ENCODE measurements at regions of chr17 and their contacts with region 1.

Region 1: GRCh38 chr17:30586818-30587595 is 109.8 kb downstream of the GOSR1 start:
- DNase-seq: peak; percentile 86
- ATAC-seq: peak; percentile 51; the same call in 1 of the 2 replicates
- H3K4me3 ChIP-seq: no peak overlapping the region
- H3K27ac ChIP-seq: no peak overlapping the region
- H3K4me1 ChIP-seq: peaks cover 2% of the 10 kb centered on the region
- H3K27me3 ChIP-seq: peaks cover 5% of the 10 kb centered on the region
- CTCF ChIP-seq: no peak
- POLR2A ChIP-seq: no peak
- RAD21 ChIP-seq: no peak

Region 2: DNA sequence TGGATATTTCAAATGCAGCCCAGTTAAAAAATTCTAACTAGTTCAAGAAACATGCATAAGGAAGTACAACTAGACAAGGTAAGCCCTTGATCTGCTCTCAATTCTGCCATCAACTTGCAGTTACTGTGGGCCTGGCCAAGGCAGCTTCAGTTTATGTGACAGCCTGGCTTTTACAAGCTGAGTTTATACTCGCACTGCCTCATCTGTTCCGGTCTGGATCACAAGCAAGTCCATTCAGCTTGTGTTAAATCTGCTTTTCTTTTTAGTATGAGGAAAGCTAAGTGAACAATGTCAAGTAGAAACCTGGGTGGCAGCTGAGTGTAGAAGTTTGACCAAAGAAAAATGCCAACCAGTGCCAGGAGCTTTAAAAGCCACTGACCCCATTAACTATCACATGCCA is 887.7 kb before region 1 on chr17:
- CTCF ChIA-PET with region 1: no interaction called
- POLR2A ChIA-PET with region 1: no interaction called
- dilution Hi-C with region 1: no loop called
- in situ Hi-C with region 1: no loop called
- intact Hi-C with region 1: no loop called
- DNase-seq: no peak
- ATAC-seq: no peak
- H3K4me3 ChIP-seq: no peak overlapping the region
- H3K27ac ChIP-seq: 0 out of 2 replicates have a peak overlapping the region, but pooled peaks have one; percentile 10
- H3K4me1 ChIP-seq: peaks cover 3% of the 10 kb centered on the region; the same call in 1 of the 2 replicates
- H3K27me3 ChIP-seq: no peaks in the 10 kb centered on the region
- CTCF ChIP-seq: no peak
- POLR2A ChIP-seq: no peak
- RAD21 ChIP-seq: no peak

Region 3: GRCh38 chr17:30093463-30094147 is 493.4 kb before region 1 on chr17:
- CTCF ChIA-PET with region 1: no interaction called
- POLR2A ChIA-PET with region 1: no interaction called
- dilution Hi-C with region 1: no loop called
- in situ Hi-C with region 1: no loop called
- intact Hi-C with region 1: no loop called
- DNase-seq: peak; percentile 58
- ATAC-seq: peak; percentile 76
- H3K4me3 ChIP-seq: no peak overlapping the region
- H3K27ac ChIP-seq: no peak overlapping the region
- H3K4me1 ChIP-seq: peaks cover 2% of the 10 kb centered on the region
- H3K27me3 ChIP-seq: no peaks in the 10 kb centered on the region
- CTCF ChIP-seq: peak; percentile 89
- POLR2A ChIP-seq: no peak
- RAD21 ChIP-seq: peak; percentile 94

Region 4: DNA sequence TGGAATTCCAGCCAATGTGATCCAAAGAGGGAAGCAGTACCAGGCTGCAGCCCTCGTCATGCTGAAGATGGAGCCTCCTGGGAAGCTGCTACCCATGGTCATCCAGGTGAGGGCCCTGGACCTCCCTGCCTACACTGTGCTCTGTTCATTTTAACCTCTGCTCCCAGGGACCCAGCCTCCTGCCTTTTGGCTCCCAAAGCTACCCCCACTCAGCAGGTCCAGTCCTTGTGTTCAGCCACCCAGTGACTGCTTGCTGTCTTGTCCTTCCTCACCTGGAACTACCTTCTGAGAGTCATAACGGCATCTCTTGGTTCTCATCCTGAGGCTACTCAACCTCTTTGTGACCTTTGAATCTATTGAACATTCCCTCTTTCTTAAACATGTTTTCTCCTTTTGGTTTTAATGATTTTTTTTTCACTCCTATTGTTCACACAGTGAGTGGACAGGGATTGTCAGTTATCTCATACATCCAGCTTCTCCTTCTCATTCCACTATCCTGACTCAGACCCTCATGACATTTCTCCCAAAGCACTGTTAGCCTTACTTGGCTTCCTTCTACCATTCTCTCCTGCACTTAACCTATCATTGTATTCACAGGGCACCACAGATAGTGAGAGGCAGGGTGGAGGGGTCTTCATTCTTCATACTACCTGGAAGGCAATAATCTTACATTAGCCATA is 56.5 kb before region 1 on chr17:
- CTCF ChIA-PET with region 1: no interaction called
- POLR2A ChIA-PET with region 1: no interaction called
- dilution Hi-C with region 1: no loop called
- in situ Hi-C with region 1: no loop called
- intact Hi-C with region 1: loop called (anchors 5 kb)
- DNase-seq: peak; percentile 71
- ATAC-seq: peak; percentile 85
- H3K4me3 ChIP-seq: no peak overlapping the region
- H3K27ac ChIP-seq: no peak overlapping the region
- H3K4me1 ChIP-seq: peaks cover 7% of the 10 kb centered on the region
- H3K27me3 ChIP-seq: no peaks in the 10 kb centered on the region
- CTCF ChIP-seq: no peak
- POLR2A ChIP-seq: no peak
- RAD21 ChIP-seq: no peak

Measured in IMR-90 (cell line).